Activated CD8-positive, alpha-beta T cell treated with anti-CD3 and anti-CD28 coated beads, Interleukin-2, amount 10 ng/mL, durations not matched to agents 7 days and 5 days (primary cell): ENCODE measurements at regions of chr16 and their contacts with region 1.

Region 1: GRCh38 chr16:67979955-67980678 is at the start of gene DPEP3:
- DNase-seq: no peak
- ATAC-seq: no peak
- H3K4me3 Mint-ChIP-seq: no peak within 1 kb of the TSS
- H3K27ac Mint-ChIP-seq: no peak within 1 kb of the TSS
- H3K4me1 Mint-ChIP-seq: peaks cover 27% of the 10 kb centered on the region
- H3K27me3 Mint-ChIP-seq: peaks cover 6% of the 10 kb centered on the region
- total RNA-seq, gene DPEP3: not detected

Region 2: DNA sequence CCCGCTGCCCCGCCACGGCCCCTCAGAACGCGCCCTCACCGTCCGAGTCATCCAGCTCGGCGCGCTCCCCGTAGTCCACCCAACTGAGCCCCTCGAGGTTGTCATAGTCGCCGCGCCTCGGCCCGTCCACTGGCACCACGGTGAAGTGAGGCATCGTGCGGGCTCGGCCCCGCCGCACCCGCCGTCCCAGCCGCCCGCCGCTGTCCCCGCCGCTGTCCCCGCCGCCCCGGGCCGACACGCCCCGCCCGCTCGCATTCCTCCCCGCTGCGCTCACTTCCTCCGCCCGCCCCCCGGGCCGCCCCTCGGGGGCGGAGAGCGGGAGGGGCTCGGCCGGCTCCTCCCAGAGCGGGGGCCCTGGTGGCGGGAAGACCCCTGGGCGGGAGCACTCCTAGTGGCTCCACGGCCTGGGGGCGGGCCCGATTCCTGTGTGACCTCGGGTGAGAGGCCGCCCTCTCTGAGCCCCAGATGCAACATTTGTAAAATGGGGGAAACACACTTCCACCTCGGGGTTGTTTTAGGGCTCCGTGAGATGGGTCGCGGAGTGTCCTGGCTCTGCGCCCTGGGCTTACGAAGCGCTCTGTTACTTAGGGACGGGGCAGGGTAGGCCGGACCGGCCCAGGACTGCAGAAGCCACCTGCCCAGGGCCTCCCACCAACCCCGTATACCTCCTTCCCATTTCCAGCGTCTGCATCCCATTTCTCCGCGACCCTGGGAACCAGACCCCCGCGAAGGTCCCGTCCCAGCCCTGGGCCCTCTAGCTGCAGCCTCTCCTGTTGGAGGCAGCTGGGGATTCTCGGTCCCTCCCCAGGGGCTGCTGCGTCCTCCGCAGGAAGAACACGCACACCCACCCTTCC is 11.5 kb before region 1 on chr16 and contains the start of gene SLC12A4:
- CTCF ChIA-PET with region 1: interaction called, 7 read pairs
- POLR2A ChIA-PET with region 1: interaction called, 10 read pairs
- DNase-seq: peak; percentile 93
- ATAC-seq: peak; percentile 88
- H3K4me3 Mint-ChIP-seq: peak within 1 kb of the TSS; percentile 98
- H3K27ac Mint-ChIP-seq: peak within 1 kb of the TSS; percentile 98
- H3K4me1 Mint-ChIP-seq: peaks cover 38% of the 10 kb centered on the region
- H3K27me3 Mint-ChIP-seq: no peaks in the 10 kb centered on the region
- total RNA-seq, gene SLC12A4: 42.5 TPM

Region 3: GRCh38 chr16:67993189-67994039 is 13.3 kb after region 1 on chr16:
- CTCF ChIA-PET with region 1: interaction called, 14 read pairs
- POLR2A ChIA-PET with region 1: interaction called, 3 read pairs
- DNase-seq: peak; percentile 89
- ATAC-seq: peak; percentile 93
- H3K4me3 Mint-ChIP-seq: peak overlapping the region; percentile 78
- H3K27ac Mint-ChIP-seq: peak overlapping the region; percentile 97
- H3K4me1 Mint-ChIP-seq: peaks cover 42% of the 10 kb centered on the region
- H3K27me3 Mint-ChIP-seq: no peaks in the 10 kb centered on the region

Region 4: DNA sequence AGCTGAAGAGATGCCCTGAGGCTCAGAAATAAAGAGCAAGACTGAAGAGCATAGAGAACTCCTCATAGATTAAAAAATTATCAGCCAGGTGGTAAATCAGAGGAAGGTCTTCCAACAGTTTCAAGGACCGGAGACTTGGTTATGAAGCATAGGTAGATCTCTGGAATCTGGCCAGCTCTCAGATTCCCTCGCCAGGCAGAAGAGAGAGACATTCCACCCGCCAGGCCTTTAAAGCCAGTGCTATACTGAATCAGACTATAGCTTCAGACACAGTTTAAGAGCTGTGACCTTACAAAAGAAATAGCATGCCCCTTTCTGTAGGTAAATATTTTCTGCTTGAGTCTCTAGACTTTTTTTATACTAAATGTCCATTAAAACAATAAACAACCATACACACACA is 175.3 kb after region 1 on chr16:
- CTCF ChIA-PET with region 1: no interaction called
- POLR2A ChIA-PET with region 1: no interaction called
- DNase-seq: no peak
- ATAC-seq: no peak
- H3K4me3 Mint-ChIP-seq: no peak overlapping the region
- H3K27ac Mint-ChIP-seq: no peak overlapping the region
- H3K4me1 Mint-ChIP-seq: no peaks in the 10 kb centered on the region
- H3K27me3 Mint-ChIP-seq: no peaks in the 10 kb centered on the region